ENCODE measurements at regions of chr16 and their contacts with region 1.

Region 1: GRCh38 chr16:28317040-28317880 is 24.9 kb downstream of the SBK1 start:
- DNase-seq: peak; percentile 82
- H3K4me3 Mint-ChIP-seq: no peak overlapping the region
- H3K27ac Mint-ChIP-seq: no peak overlapping the region
- H3K4me1 Mint-ChIP-seq: peaks cover 30% of the 10 kb centered on the region
- H3K27me3 Mint-ChIP-seq: no peaks in the 10 kb centered on the region

Region 2: GRCh38 chr16:28053461-28053860 is 263.8 kb before region 1 on chr16:
- CTCF ChIA-PET with region 1: no interaction called
- intact Hi-C with region 1: no loop called
- DNase-seq: no peak
- H3K4me3 Mint-ChIP-seq: no peak overlapping the region
- H3K27ac Mint-ChIP-seq: no peak overlapping the region
- H3K4me1 Mint-ChIP-seq: no peaks in the 10 kb centered on the region
- H3K27me3 Mint-ChIP-seq: peaks cover 16% of the 10 kb centered on the region

Region 3: GRCh38 chr16:28063641-28064061 is 253.6 kb before region 1 on chr16 and contains the start of gene GSG1L:
- CTCF ChIA-PET with region 1: no interaction called
- intact Hi-C with region 1: no loop called
- DNase-seq: no peak
- H3K4me3 Mint-ChIP-seq: no peak within 1 kb of the TSS
- H3K27ac Mint-ChIP-seq: no peak within 1 kb of the TSS
- H3K4me1 Mint-ChIP-seq: peaks cover 3% of the 10 kb centered on the region
- H3K27me3 Mint-ChIP-seq: peaks cover 41% of the 10 kb centered on the region
- total RNA-seq, gene GSG1L: not detected

Region 4: DNA sequence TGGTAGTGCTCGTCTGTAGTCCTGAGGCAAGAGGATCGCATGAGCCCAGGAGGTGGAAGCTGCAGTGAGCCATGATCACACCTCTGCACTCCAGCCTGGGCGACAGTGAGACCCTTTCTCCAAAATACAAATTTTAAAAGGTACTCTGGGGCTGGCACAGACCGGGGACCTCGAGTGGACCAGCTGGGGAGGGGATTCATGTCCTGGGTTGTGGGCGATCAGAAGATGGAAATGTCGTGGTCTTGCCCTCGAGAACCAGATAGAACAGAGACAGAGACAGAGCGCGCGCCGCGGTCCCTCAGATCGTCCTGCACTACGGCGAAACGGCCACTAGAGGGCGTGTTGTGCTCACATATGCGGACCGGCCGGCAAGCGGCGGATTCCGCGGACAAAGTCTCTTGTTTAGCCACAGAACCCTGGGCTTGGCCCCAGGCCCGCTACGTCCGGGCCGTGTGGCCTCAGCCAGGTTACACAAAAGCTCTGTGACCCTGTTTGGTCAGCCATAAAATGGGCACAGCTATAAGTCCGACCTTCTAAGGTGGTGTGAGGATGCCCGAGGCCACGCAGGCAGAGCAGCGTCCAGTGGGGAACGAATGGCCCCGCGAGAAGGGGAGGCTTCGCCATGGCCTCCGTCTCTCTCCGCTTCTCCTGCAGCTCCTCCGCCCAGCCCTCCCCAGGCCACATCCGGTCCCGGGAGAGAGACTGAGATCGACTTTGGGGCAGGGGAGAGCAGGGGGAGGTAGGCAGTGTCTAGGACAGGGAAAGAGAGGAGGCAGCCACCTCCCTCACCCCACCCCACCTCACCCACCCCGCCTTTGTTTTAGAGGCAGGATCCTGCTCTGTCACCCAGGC is 39.5 kb before region 1 on chr16:
- CTCF ChIA-PET with region 1: interaction called, 164 read pairs
- intact Hi-C with region 1: loop called (anchors 1 kb)
- DNase-seq: peak; percentile 88
- H3K4me3 Mint-ChIP-seq: peak overlapping the region; percentile 66
- H3K27ac Mint-ChIP-seq: no peak overlapping the region
- H3K4me1 Mint-ChIP-seq: peaks cover 31% of the 10 kb centered on the region
- H3K27me3 Mint-ChIP-seq: no peaks in the 10 kb centered on the region

Region 5: GRCh38 chr16:28291873-28292660 is 25.2 kb before region 1 on chr16 and contains the start of gene SBK1:
- CTCF ChIA-PET with region 1: interaction called, 24 read pairs
- intact Hi-C with region 1: no loop called
- DNase-seq: peak; percentile 78
- H3K4me3 Mint-ChIP-seq: peak within 1 kb of the TSS; percentile 87
- H3K27ac Mint-ChIP-seq: peak within 1 kb of the TSS; percentile 83
- H3K4me1 Mint-ChIP-seq: peaks cover 49% of the 10 kb centered on the region
- H3K27me3 Mint-ChIP-seq: no peaks in the 10 kb centered on the region
- total RNA-seq, gene SBK1: 2.8 to 3.4 TPM

Region 6: DNA sequence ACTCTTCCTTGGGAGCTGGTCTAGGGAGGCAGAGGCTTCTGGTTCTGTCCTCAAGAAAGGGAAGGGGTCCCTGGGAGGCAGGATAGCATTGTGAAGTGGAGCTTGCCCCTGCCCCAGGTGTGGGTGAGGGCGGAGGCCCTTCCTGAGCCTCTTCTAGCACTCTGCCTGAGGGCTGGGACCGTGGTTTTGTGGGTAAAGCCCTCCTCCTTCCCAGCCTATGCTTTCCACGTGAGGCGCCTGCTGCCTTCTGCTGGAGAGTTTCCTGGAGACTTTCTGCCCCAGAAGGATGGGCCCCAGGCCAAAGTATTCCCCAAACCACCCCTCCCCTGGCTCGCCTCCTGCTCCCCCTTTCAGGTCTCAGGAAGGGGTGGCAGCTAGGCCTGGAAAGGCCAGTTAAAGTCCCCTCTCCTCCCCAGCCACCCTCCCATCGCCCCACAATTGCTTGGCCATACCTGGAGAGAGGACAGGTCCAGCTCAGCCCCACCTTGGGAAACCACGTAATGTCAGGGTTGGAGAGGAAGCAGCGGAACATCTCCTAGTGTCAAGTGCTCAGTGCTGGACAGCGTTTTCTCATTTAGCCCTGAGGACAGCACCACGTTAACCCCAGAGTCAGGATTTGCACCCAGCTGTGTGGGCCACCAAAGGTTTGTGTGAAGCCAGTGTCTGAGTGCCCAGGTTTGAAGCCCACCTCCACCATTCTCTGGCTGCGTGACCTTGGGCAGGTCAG is 19.3 kb before region 1 on chr16:
- CTCF ChIA-PET with region 1: interaction called, 24 read pairs
- intact Hi-C with region 1: no loop called
- DNase-seq: no peak
- H3K4me3 Mint-ChIP-seq: no peak overlapping the region
- H3K27ac Mint-ChIP-seq: peak overlapping the region; percentile 25
- H3K4me1 Mint-ChIP-seq: peaks cover 63% of the 10 kb centered on the region
- H3K27me3 Mint-ChIP-seq: no peaks in the 10 kb centered on the region

Region 7: DNA sequence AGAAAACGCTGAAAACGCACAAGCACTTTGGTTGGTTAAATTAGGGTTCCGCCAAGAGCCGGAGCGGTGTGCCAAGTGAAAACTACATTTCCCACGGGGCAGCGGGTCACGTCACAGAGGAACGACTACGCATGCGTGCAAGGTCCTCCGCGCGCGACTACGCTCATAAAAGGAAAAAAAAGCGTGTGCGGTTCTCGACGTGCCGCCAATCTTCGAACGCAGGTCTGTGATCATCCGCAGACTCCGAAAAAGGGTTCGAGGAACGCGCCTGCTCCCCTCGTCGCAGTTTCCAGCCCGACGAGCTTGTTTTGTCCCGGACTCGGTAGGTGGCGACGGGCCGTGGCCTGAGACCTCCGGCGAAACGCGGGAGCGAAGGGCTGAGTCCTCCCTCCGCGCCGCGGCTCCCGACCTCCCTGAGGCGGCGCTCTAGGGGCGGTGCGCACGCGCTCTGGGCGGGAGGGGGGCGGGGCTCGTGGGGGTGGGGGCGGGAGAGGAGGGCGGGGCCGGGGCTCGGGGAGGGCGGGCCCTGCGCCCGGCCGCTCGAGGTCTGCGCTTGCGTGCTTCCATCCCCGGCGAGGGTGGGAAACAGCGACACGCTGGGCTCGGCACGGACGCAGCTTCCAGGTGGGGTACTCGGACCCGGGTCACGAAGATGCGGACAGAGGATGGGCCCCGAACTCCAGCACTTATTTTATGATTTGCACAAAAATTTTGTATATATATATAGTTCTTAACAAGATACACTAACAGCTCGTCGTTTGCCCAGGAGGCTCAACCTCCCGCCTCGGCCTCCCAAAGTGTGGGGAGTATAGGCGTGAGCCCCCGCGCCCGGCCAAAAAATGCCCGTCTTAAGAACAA is 236.7 kb after region 1 on chr16 and contains the start of gene SGF29:
- CTCF ChIA-PET with region 1: no interaction called
- intact Hi-C with region 1: loop called (anchors 1 kb)
- DNase-seq: peak; percentile 96
- H3K4me3 Mint-ChIP-seq: peak within 1 kb of the TSS; percentile 93
- H3K27ac Mint-ChIP-seq: peak within 1 kb of the TSS; percentile 97
- H3K4me1 Mint-ChIP-seq: peaks cover 41% of the 10 kb centered on the region
- H3K27me3 Mint-ChIP-seq: no peaks in the 10 kb centered on the region
- total RNA-seq, gene SGF29: 15.9 TPM